Activated CD8-positive, alpha-beta T cell treated with anti-CD3 and anti-CD28 coated beads for 36 hours (primary cell): ENCODE measurements at regions of chr10 and their contacts with region 1.

Region 1: DNA sequence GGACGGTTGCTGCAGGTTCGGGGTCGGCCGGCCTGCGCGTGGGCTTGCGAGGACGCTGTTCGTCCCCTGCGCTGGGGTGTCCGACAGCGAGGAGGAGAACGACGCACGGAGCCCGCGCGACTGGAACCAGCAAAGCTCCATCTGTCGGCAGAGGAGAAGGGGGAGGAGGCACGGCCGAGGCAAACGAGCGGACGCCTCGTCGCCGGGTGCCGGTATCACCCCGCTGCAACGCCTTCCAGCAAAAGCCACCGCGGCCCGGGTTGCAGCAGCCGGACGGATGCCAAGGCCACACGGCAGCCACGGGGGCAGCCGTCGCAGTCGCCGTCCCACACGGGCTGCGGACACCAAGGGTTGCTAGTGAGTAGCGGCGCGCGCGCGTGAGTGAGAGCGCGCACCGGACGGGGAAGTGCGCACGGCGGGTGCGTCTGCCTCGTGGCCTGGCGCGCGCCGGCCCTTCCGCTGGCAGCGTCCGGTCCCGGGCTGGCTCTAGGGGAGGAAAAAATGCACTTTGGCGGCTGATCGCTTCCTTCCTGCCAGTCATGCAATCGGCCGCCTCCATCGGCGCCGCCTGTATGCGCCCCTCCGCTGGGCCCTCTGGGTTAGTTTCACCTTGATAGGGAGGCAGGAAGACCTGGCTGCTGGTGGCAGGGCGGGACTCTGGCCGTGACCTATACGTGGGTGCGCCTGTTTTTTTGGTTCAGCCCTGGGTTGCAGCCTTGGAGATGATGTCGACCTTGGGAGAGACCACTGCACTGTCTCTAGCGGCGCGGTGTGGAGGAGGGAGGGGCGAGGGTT is 434 bp downstream of the STAMBPL1 start:
- DNase-seq: peak; percentile 89
- ATAC-seq: peak; percentile 83
- H3K4me3 Mint-ChIP-seq: peak overlapping the region; percentile 91
- H3K27ac Mint-ChIP-seq: peak overlapping the region; percentile 98
- H3K4me1 Mint-ChIP-seq: peaks cover 61% of the 10 kb centered on the region
- H3K27me3 Mint-ChIP-seq: no peaks in the 10 kb centered on the region
- CTCF ChIP-seq: no peak

Region 2: GRCh38 chr10:88437411-88437810 is 443.1 kb before region 1 on chr10:
- CTCF ChIA-PET with region 1: no interaction called
- POLR2A ChIA-PET with region 1: no interaction called
- intact Hi-C with region 1: no loop called
- DNase-seq: no peak
- ATAC-seq: no peak
- H3K4me3 Mint-ChIP-seq: no peak overlapping the region
- H3K27ac Mint-ChIP-seq: no peak overlapping the region
- H3K4me1 Mint-ChIP-seq: no peaks in the 10 kb centered on the region
- H3K27me3 Mint-ChIP-seq: no peaks in the 10 kb centered on the region
- CTCF ChIP-seq: no peak

Region 3: GRCh38 chr10:88865281-88865876 is 15.1 kb before region 1 on chr10:
- CTCF ChIA-PET with region 1: interaction called, 6 read pairs
- POLR2A ChIA-PET with region 1: interaction called, 15 read pairs
- intact Hi-C with region 1: no loop called
- DNase-seq: no peak
- ATAC-seq: no peak
- H3K4me3 Mint-ChIP-seq: no peak overlapping the region
- H3K27ac Mint-ChIP-seq: no peak overlapping the region
- H3K4me1 Mint-ChIP-seq: no peaks in the 10 kb centered on the region
- H3K27me3 Mint-ChIP-seq: peaks cover 5% of the 10 kb centered on the region
- CTCF ChIP-seq: no peak

Region 4: DNA sequence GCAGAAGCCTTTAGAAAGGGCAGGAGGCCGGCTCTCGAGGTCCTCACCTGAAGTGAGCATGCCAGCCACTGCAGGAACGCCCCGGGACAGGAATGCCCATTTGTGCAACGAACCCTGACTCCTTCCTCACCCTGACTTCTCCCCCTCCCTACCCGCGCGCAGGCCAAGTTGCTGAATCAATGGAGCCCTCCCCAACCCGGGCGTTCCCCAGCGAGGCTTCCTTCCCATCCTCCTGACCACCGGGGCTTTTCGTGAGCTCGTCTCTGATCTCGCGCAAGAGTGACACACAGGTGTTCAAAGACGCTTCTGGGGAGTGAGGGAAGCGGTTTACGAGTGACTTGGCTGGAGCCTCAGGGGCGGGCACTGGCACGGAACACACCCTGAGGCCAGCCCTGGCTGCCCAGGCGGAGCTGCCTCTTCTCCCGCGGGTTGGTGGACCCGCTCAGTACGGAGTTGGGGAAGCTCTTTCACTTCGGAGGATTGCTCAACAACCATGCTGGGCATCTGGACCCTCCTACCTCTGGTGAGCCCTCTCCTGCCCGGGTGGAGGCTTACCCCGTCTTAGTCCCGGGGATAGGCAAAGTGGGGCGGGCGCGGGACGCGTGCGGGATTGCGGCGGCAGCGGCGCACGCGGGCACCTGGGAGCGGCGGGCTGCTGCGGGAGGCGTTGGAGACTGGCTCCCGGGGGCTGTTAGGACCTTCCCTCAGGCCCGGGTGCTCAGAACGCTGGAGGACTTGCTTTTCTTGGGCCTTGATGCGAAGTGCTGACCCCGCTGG is 110.1 kb after region 1 on chr10 and contains the start of gene FAS:
- CTCF ChIA-PET with region 1: no interaction called
- POLR2A ChIA-PET with region 1: interaction called, 11 read pairs
- intact Hi-C with region 1: no loop called
- DNase-seq: peak; percentile 91
- ATAC-seq: peak; percentile 79
- H3K4me3 Mint-ChIP-seq: peak within 1 kb of the TSS; percentile 86
- H3K27ac Mint-ChIP-seq: peak within 1 kb of the TSS; percentile 96
- H3K4me1 Mint-ChIP-seq: peaks cover 54% of the 10 kb centered on the region
- H3K27me3 Mint-ChIP-seq: no peaks in the 10 kb centered on the region
- CTCF ChIP-seq: no peak
- total RNA-seq, gene FAS: 48.6 to 49.0 TPM

Region 5: GRCh38 chr10:89086801-89087521 is 206.5 kb after region 1 on chr10:
- CTCF ChIA-PET with region 1: no interaction called
- POLR2A ChIA-PET with region 1: no interaction called
- intact Hi-C with region 1: no loop called
- DNase-seq: peak; percentile 66
- ATAC-seq: peak; percentile 68
- H3K4me3 Mint-ChIP-seq: no peak overlapping the region
- H3K27ac Mint-ChIP-seq: no peak overlapping the region
- H3K4me1 Mint-ChIP-seq: peaks cover 18% of the 10 kb centered on the region
- H3K27me3 Mint-ChIP-seq: no peaks in the 10 kb centered on the region
- CTCF ChIP-seq: no peak